Upper lobe of right lung (tissue), 1 donor: ENCODE measurements at regions of chr1 and their contacts with region 1.

Region 1: GRCh38 chr1:226195144-226195543 is 8.6 kb upstream of the ACBD3 start:
- DNase-seq: no peak
- ATAC-seq: no peak
- H3K4me3 ChIP-seq: no peak overlapping the region
- H3K27ac ChIP-seq: no peak overlapping the region
- H3K4me1 ChIP-seq: no peaks in the 10 kb centered on the region
- H3K27me3 ChIP-seq: no peaks in the 10 kb centered on the region
- CTCF ChIP-seq: no peak

Region 2: DNA sequence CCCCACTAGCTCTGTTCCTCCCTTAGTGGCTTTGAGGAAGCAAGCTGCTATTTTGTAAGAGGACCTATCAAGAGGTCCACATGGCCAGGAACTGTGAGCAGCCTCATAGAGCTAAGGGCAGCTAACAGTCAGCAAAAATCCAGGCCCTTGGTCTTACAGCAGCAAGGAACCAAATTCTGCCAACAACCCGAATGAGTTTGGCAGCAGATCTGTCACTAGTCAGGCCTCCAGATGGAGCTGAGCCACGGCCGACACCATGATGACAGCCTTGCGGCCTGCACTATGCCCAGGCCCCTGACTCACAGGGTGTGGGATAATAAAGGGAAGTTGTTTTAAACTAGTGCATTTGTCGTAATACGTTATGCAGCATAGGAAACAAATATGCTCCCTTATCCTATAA is 160.7 kb before region 1 on chr1:
- intact Hi-C with region 1: no loop called
- DNase-seq: peak; percentile 85
- ATAC-seq: peak; percentile 94
- H3K4me3 ChIP-seq: no peak overlapping the region
- H3K27ac ChIP-seq: peak overlapping the region; percentile 77
- H3K4me1 ChIP-seq: peaks cover 15% of the 10 kb centered on the region
- H3K27me3 ChIP-seq: no peaks in the 10 kb centered on the region
- CTCF ChIP-seq: no peak

Region 3: DNA sequence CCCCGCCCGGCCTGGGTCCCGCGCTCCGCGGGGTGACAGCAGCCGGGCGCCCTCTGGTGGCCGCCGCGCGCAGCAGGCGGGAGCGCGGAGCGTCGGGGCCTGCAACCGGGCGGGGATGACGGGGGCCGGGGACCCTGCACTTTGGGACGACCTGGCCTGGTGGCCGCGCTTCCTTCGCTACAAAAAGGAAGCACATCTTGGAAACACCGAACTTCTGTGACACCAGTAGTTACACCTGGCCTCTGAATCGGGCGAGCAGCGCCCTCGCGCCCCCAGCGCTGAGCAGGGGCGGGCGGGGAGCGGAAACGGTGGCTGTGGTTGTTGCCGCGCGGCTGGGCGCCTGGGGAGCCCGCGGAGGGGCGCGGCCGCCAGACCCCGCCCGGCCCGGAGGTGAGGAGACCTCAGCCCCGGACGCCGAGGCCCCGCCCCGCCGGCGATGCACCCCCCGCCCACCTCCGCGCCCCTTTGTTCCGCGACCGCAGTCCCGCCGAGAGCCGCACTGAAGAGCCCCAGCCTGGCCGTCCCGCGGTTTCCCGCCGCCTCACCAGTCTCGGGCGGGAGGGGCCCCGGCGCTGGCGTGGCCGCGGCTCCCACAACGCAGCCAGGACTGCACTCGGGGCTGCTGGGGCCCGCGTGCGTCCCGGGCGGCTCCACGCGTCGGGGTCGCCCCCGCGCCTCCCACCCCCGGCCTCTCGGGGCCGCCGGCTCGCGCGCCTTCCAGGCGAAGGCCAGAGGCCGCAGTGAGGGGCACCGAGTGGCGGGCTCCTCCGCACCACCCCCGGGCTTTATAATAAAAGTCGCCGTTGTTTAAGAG is 73.3 kb before region 1 on chr1:
- intact Hi-C with region 1: loop called (anchors 5 kb)
- DNase-seq: peak; percentile 88
- ATAC-seq: peak; percentile 89
- H3K4me3 ChIP-seq: peak overlapping the region; percentile 69
- H3K27ac ChIP-seq: peak overlapping the region; percentile 82
- H3K4me1 ChIP-seq: peaks cover 6% of the 10 kb centered on the region
- H3K27me3 ChIP-seq: no peaks in the 10 kb centered on the region
- CTCF ChIP-seq: peak; percentile 71

Region 4: DNA sequence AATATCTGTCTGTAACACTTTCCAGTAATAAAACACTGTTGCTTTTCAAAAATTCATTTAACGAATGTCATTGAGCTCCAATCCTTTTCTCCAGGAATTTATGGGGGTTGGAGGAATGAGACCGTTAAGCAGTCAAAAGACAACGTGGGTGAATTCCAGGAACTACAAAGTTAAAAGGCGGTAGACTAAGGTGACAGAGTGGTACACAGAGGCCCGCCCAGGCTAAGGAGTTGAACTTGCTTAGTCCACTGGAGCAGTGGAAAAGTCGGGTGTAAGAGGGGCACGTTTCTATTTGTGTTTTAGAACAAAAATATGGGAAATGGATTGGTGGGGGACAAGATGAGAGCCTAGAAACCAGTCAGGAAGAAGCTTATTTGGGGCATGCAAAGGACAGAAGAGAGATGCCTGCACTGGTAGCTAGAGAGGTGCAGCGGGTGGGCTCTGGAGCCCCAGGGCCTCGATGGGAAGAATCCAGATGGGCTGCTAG is 115.0 kb after region 1 on chr1:
- intact Hi-C with region 1: no loop called
- DNase-seq: no peak
- ATAC-seq: no peak
- H3K4me3 ChIP-seq: peak overlapping the region; percentile 93
- H3K27ac ChIP-seq: peak overlapping the region; percentile 56
- H3K4me1 ChIP-seq: peaks cover 6% of the 10 kb centered on the region
- H3K27me3 ChIP-seq: no peaks in the 10 kb centered on the region
- CTCF ChIP-seq: no peak